H1 (cell line): ENCODE measurements at regions of chr5 and their contacts with region 1.

Region 1: DNA sequence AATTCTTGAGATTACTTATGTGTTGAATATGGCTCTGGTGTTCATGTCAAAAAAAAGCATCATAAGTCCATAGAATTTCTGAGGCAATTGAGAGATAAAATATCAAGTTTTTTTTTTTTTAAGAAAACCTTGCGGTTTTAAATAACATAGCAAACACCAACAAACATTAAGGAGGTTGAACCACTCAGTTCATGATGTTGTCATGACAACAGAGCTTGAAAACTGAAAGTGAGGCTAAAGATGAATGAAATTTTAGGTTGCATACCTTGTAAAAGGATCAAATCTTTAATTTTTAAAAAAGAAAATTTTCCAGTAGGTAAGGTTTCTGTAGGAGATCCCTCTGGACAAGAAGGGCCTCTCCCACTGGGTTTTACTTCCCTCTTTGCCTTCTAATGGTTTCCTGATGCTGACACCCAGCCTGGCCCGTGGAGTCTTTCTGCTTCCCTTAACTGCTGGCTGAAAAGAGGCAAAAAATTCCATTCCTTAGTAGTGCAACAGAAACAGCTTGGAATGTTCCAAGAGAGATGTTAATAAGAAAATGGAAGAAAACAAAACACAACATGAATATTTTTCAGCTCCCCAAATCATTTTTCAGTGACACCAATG is 60.0 kb upstream of the FER start:
- DNase-seq: no peak
- H3K4me3 ChIP-seq: no peak overlapping the region
- H3K27ac ChIP-seq: 0 out of 2 replicates have a peak overlapping the region, but pooled peaks have one; percentile 70
- H3K4me1 ChIP-seq: peaks cover 6 to 20% (median 13%) of the 10 kb centered on the region in 4 experiments
- H3K27me3 ChIP-seq: no peaks in the 10 kb centered on the region
- CTCF ChIP-seq: no peak
- EP300 ChIP-seq: no peak
- POLR2A ChIP-seq: no peak
- RAD21 ChIP-seq: no peak

Region 2: DNA sequence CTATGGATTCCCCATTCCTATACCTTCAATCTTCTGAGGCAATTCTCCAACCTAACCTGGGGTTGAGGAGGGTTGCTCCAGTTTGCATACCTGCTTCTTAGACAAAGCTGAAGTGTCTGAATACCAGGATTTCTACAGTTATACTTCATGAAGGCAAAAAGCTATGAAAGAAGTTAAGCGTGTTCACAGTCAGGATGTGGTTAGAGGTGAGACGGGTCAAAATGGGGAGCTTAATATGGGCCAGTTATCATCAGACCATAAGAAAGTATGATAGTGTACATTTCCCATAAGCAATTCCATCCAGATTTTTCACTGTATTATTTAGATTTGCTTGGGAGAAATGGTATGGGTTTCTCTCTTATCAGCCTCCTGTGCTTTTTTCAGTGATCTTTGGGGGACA is 96.9 kb before region 1 on chr5:
- CTCF ChIA-PET with region 1: no interaction called
- POLR2A ChIA-PET with region 1: no interaction called
- DNase-seq: no peak
- H3K4me3 ChIP-seq: no peak overlapping the region
- H3K27ac ChIP-seq: no peak overlapping the region
- H3K4me1 ChIP-seq: no peaks in the 10 kb centered on the region; a peak in 1 of 7 replicates
- H3K27me3 ChIP-seq: no peaks in the 10 kb centered on the region
- CTCF ChIP-seq: no peak
- EP300 ChIP-seq: no peak
- POLR2A ChIP-seq: no peak
- RAD21 ChIP-seq: no peak

Region 3: GRCh38 chr5:108727651-108728565 is 40.2 kb after region 1 on chr5:
- CTCF ChIA-PET with region 1: interaction called, 4 read pairs
- POLR2A ChIA-PET with region 1: interaction called, 44 read pairs
- DNase-seq: peak; percentile 77 to 93
- H3K4me3 ChIP-seq: peak overlapping the region; percentile 76 to 85 (median 80)
- H3K27ac ChIP-seq: peak overlapping the region; percentile 84; the same call in 1 of the 2 replicates
- H3K4me1 ChIP-seq: peaks cover 0 to 4% (median 3%) of the 10 kb centered on the region in 4 experiments; a peak in 3 of 7 replicates
- H3K27me3 ChIP-seq: no peaks in the 10 kb centered on the region
- CTCF ChIP-seq: no peak
- EP300 ChIP-seq: 0 out of 3 replicates have a peak, but pooled peaks of 1 of the 2 experiments have one; percentile 6
- POLR2A ChIP-seq: peak in 1 of 2 experiments; percentile 94; a peak in 2 of 3 replicates
- RAD21 ChIP-seq: peak; percentile 18 to 34; a peak in 3 of 4 replicates

Region 4: GRCh38 chr5:108748401-108749127 is 60.9 kb after region 1 on chr5:
- CTCF ChIA-PET with region 1: no interaction called
- POLR2A ChIA-PET with region 1: interaction called, 21 read pairs
- DNase-seq: peak; percentile 98 to 99
- H3K4me3 ChIP-seq: peak overlapping the region; percentile 75 to 100 (median 82)
- H3K27ac ChIP-seq: peak overlapping the region; percentile 95
- H3K4me1 ChIP-seq: peaks cover 0 to 2% (median 0%) of the 10 kb centered on the region in 4 experiments; a peak in 2 of 7 replicates
- H3K27me3 ChIP-seq: no peaks in the 10 kb centered on the region
- CTCF ChIP-seq: peak; percentile 16 to 20 (median 19); a peak in 3 of 4 replicates
- EP300 ChIP-seq: no peak
- POLR2A ChIP-seq: peak; percentile 98
- RAD21 ChIP-seq: peak in 1 of 2 experiments; percentile 22; a peak in 2 of 4 replicates